ENCODE measurements at regions of chr12 and their contacts with region 1.

Region 1: GRCh38 chr12:14664510-14664909 is 31.9 kb downstream of the GUCY2C start:
- DNase-seq: peak; percentile 37
- H3K4me3 Mint-ChIP-seq: no peak overlapping the region
- H3K27ac Mint-ChIP-seq: no peak overlapping the region
- H3K4me1 Mint-ChIP-seq: no peaks in the 10 kb centered on the region
- H3K27me3 Mint-ChIP-seq: no peaks in the 10 kb centered on the region
- CTCF ChIP-seq: no peak

Region 2: DNA sequence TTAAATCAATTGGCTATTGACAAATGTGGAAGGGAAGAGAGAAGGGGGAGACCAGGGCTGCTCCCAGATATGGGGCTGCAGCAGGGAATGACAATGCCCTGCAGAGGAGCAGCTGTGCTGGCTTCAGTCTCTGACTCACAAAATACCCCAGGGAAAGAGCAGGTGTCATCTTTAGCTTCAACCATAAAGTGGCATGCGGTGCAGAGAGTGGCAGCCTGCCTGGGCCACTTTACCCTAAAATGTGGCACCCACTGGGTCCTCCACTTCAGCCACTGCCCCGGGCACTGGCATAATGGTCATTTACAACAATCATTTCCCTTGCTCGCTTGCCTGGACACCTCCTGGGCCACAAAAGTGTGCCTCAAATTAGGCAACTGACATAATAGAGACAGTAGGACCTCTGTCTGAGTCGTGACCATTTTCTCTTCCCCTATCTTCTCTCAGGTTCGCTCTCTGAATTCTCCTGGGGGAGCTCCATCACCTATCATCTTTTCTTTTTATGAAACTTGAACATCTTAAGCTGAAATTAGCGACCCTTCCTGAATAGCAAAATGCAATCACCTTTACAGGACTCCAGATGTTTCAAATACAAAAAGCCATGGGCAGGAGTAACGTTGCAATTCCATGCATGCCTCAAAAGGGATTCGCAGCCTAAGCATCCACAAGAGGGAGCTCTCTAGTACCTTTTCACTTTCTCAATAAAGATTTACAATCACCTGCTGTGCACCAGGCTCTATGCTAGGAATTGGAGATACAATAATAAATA is 478.9 kb before region 1 on chr12:
- CTCF ChIA-PET with region 1: interaction called, 3 read pairs
- intact Hi-C with region 1: loop called (anchors 5 kb)
- DNase-seq: peak; percentile 47
- H3K4me3 Mint-ChIP-seq: no peak overlapping the region
- H3K27ac Mint-ChIP-seq: no peak overlapping the region
- H3K4me1 Mint-ChIP-seq: peaks cover 28% of the 10 kb centered on the region
- H3K27me3 Mint-ChIP-seq: no peaks in the 10 kb centered on the region
- CTCF ChIP-seq: peak; percentile 44

Region 3: GRCh38 chr12:14629832-14630710 is 34.4 kb before region 1 on chr12:
- CTCF ChIA-PET with region 1: no interaction called
- intact Hi-C with region 1: loop called (anchors 1 kb)
- DNase-seq: peak; percentile 71
- H3K4me3 Mint-ChIP-seq: no peak overlapping the region
- H3K27ac Mint-ChIP-seq: no peak overlapping the region
- H3K4me1 Mint-ChIP-seq: no peaks in the 10 kb centered on the region
- H3K27me3 Mint-ChIP-seq: no peaks in the 10 kb centered on the region
- CTCF ChIP-seq: peak; percentile 84

Region 4: DNA sequence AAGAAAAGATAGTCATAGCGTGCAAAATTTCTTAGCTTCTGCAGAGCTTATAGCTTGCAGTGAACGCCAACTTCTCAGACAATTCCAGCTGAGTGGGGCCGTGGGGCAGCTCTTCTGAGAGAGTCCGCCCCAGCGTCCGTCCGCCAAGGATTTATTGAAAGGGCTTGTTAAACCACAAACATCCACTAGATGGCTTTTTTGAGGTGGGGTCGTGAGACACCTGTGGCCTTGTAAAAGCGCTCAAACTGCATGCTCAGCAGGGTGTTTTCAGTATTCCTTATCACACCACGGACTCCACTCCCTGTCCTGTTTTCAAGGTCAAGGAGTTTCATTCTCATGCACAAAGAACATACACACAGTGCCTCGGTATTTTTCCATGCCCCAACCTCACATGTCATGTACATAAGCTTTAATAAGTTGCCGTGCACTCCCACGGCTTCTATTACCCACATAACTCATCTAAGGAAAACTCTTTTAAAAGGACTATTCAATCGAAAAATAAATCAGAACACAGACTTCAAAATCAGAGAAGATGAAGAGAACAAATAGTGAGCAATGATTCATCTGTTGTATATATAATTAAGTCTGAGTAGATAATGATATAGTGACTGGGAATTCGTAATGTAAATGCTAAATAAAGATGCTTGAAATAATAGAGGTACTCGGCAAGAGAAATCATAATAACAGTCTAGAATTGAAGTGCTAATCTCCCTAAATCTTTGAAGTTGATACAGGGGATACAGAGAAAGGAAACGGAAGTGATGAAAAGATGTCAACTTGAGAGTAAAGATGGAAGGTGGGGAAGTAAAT is 92.0 kb after region 1 on chr12:
- CTCF ChIA-PET with region 1: no interaction called
- intact Hi-C with region 1: no loop called
- DNase-seq: peak; percentile 54
- H3K4me3 Mint-ChIP-seq: no peak overlapping the region
- H3K27ac Mint-ChIP-seq: no peak overlapping the region
- H3K4me1 Mint-ChIP-seq: peaks cover 8% of the 10 kb centered on the region
- H3K27me3 Mint-ChIP-seq: no peaks in the 10 kb centered on the region
- CTCF ChIP-seq: peak; percentile 74

Region 5: GRCh38 chr12:14960548-14961465 is 296.3 kb after region 1 on chr12:
- CTCF ChIA-PET with region 1: no interaction called
- intact Hi-C with region 1: no loop called
- DNase-seq: peak; percentile 30
- H3K4me3 Mint-ChIP-seq: peak overlapping the region; percentile 66
- H3K27ac Mint-ChIP-seq: peak overlapping the region; percentile 60
- H3K4me1 Mint-ChIP-seq: peaks cover 11% of the 10 kb centered on the region
- H3K27me3 Mint-ChIP-seq: no peaks in the 10 kb centered on the region
- CTCF ChIP-seq: no peak

Measured in Calu3 (cell line).